CD4-positive, alpha-beta T cell (primary cell): ENCODE measurements at regions of chr3 and their contacts with region 1.

Region 1: DNA sequence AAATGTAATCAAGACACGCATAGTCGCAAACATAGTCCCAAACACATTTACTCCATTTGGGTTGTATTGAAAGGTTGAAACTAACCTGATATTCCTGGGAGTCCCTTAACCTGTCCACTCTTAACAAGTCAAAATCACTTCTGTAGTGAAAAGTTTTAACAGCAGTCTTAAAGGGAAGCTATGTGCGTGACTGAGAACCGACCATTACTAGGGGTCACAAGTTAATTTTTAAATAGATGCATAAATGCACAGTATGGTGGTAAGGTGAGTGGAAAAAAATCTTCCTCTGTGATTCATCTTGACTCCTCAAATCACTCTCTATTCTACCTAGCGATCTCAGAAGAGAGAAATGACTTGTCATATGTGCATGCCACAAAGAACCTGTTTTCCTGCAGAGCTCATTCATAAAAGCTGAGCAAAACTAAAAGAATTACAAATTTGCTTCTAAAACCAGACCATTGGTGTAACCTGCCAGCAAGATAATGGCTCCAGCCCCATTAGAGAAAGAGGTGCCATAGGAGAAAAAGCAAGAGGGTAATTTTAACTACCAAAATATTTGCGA is 4.8 kb downstream of the GPR15 start:
- DNase-seq: no peak
- ATAC-seq: no peak
- H3K4me3 ChIP-seq: peak overlapping the region; percentile 16
- H3K4me3 Mint-ChIP-seq: peak overlapping the region; percentile 9
- H3K27ac ChIP-seq: no peak overlapping the region
- H3K27ac Mint-ChIP-seq: peak overlapping the region; percentile 2
- H3K4me1 ChIP-seq: no peaks in the 10 kb centered on the region
- H3K4me1 Mint-ChIP-seq: peaks cover 8% of the 10 kb centered on the region
- H3K27me3 ChIP-seq: no peaks in the 10 kb centered on the region
- H3K27me3 Mint-ChIP-seq: no peaks in the 10 kb centered on the region
- CTCF ChIP-seq: no peak

Region 2: GRCh38 chr3:98563661-98564281 is 27.2 kb after region 1 on chr3:
- CTCF ChIA-PET with region 1: no interaction called
- POLR2A ChIA-PET with region 1: interaction called, 10 read pairs
- intact Hi-C with region 1: no loop called
- DNase-seq: peak in 8 of 14 experiments; percentile 10 to 90 (median 32)
- ATAC-seq: peak; percentile 70
- H3K4me3 ChIP-seq: no peak overlapping the region
- H3K4me3 Mint-ChIP-seq: peak overlapping the region; percentile 84
- H3K27ac ChIP-seq: peak overlapping the region; percentile 77 to 90
- H3K27ac Mint-ChIP-seq: peak overlapping the region; percentile 100
- H3K4me1 ChIP-seq: peaks cover 46% of the 10 kb centered on the region
- H3K4me1 Mint-ChIP-seq: peaks cover 83% of the 10 kb centered on the region
- H3K27me3 ChIP-seq: no peaks in the 10 kb centered on the region
- H3K27me3 Mint-ChIP-seq: no peaks in the 10 kb centered on the region
- CTCF ChIP-seq: no peak

Region 3: GRCh38 chr3:98602078-98602678 is 65.6 kb after region 1 on chr3:
- CTCF ChIA-PET with region 1: no interaction called
- POLR2A ChIA-PET with region 1: no interaction called
- intact Hi-C with region 1: no loop called
- DNase-seq: peak in 4 of 14 experiments; percentile 13 to 56 (median 42)
- ATAC-seq: peak; percentile 79
- H3K4me3 ChIP-seq: no peak overlapping the region
- H3K4me3 Mint-ChIP-seq: no peak overlapping the region
- H3K27ac ChIP-seq: no peak overlapping the region
- H3K27ac Mint-ChIP-seq: no peak overlapping the region
- H3K4me1 ChIP-seq: no peaks in the 10 kb centered on the region
- H3K4me1 Mint-ChIP-seq: no peaks in the 10 kb centered on the region
- H3K27me3 ChIP-seq: no peaks in the 10 kb centered on the region
- H3K27me3 Mint-ChIP-seq: peaks cover 13% of the 10 kb centered on the region
- CTCF ChIP-seq: peak; percentile 74